RWPE1 (cell line): ENCODE measurements at regions of chr4 and their contacts with region 1.

Region 1: GRCh38 chr4:138090150-138090917 is 151.8 kb downstream of the SLC7A11 start:
- DNase-seq: peak; percentile 79
- H3K27ac ChIP-seq: no peak overlapping the region
- CTCF ChIP-seq: peak; percentile 81

Region 2: DNA sequence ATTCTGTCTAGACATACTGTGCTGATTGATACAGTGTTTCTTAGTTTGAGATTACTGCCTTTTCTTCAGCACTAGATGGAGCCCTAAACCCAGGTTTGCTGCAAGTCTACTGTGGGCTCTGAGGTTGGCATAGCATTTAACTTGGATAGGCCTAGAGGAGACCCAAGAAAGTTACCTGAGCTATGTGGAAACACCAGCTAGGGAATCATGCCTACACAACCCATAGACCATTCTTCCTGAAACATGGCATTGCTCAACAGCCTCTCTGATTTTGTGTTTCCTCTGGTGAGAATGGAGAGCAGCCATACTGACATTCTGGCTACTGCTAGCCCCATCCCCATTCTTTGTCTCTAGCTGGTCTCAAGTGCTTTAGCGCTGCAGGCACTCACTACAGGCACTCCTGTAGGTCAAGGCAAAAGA is 270.4 kb before region 1 on chr4:
- CTCF ChIA-PET with region 1: interaction called, 14 read pairs
- POLR2A ChIA-PET with region 1: no interaction called
- DNase-seq: peak; percentile 43
- H3K27ac ChIP-seq: no peak overlapping the region
- CTCF ChIP-seq: peak; percentile 64

Region 3: DNA sequence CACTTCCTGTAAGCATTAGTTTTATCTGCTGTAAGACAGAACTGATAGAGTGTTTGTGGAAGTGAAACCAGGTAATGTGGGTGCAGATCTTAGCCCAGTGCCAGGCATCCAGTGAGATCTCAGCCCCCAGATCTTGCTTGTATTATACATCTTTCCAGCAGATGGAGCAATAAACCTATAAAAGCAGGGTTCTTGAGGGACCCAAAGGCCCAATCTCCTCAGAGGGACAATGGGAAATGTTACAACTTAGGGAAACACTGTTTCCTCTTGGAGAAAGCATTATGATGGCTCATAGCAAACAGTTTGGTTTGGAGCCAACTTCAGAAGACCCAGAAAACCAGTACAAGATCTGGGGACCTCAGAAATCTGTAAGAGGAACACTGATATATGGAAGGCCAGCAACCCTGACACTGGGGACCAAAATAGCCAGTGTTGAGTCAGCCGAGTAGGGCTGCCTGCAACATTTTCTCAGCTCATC is 54.5 kb before region 1 on chr4:
- CTCF ChIA-PET with region 1: interaction called, 15 read pairs
- POLR2A ChIA-PET with region 1: no interaction called
- DNase-seq: peak; percentile 73
- H3K27ac ChIP-seq: no peak overlapping the region
- CTCF ChIP-seq: peak; percentile 38